CD8-positive, alpha-beta memory T cell (primary cell): ENCODE measurements at regions of chr14 and their contacts with region 1.

Region 1: GRCh38 chr14:103104654-103105452 is 10.3 kb downstream of the EXOC3L4 start:
- DNase-seq: peak; percentile 59 to 73 (median 65)
- H3K4me3 ChIP-seq: no peak overlapping the region
- H3K4me3 Mint-ChIP-seq: peak overlapping the region in 3 of 7 donors; percentile 27 to 40 (median 38)
- H3K27ac ChIP-seq: no peak overlapping the region
- H3K27ac Mint-ChIP-seq: no peak overlapping the region
- H3K4me1 ChIP-seq: peaks cover 5% of the 10 kb centered on the region
- H3K4me1 Mint-ChIP-seq: peaks cover 0 to 12% (median 5%) of the 10 kb centered on the region in 3 donors
- H3K27me3 ChIP-seq: peaks cover 10% of the 10 kb centered on the region
- H3K27me3 Mint-ChIP-seq: peaks cover 16 to 25% of the 10 kb centered on the region in 2 donors

Region 2: DNA sequence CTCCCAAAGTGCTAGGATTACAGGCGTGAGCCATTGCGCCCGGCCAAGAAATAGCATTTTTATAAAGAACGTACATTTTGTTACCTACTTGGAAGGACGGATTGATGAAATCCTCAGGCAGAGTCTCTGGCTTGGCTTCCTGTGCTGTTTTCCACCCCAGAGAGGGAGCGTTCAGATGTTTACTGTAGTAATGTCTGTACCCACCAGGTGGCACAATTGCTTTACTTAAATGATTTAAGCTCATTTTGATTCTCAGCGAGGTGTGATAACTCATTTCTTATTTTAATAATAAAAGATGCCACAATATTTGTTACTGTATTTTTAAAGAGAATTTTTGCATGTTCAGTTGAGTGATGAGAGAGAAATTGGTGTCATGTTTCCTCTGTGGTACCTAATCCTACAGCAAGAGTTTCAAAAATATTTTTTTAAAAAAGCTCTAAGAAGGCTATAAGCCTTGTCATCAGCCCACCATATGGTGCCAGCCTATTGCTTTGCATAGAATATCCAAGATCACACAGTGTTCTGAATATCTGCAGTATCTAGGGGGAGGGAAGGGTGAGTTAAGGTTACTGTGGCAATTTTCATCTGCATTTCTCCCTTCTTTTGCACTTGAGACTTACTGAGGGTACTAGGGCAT is 410.2 kb before region 1 on chr14:
- CTCF ChIA-PET with region 1: interaction called, 20 read pairs
- POLR2A ChIA-PET with region 1: no interaction called
- DNase-seq: peak; percentile 19 to 59 (median 42)
- H3K4me3 ChIP-seq: no peak overlapping the region
- H3K4me3 Mint-ChIP-seq: no peak overlapping the region
- H3K27ac ChIP-seq: no peak overlapping the region
- H3K27ac Mint-ChIP-seq: peak overlapping the region in 1 of 8 donors; percentile 7
- H3K4me1 ChIP-seq: peaks cover 12% of the 10 kb centered on the region
- H3K4me1 Mint-ChIP-seq: peaks cover 14 to 39% (median 29%) of the 10 kb centered on the region in 3 donors
- H3K27me3 ChIP-seq: no peaks in the 10 kb centered on the region
- H3K27me3 Mint-ChIP-seq: no peaks in the 10 kb centered on the region

Region 3: GRCh38 chr14:103094406-103095209 is 10.2 kb before region 1 on chr14 and contains the start of gene EXOC3L4:
- CTCF ChIA-PET with region 1: interaction called, 28 read pairs
- POLR2A ChIA-PET with region 1: no interaction called
- DNase-seq: no peak
- H3K4me3 ChIP-seq: no peak within 1 kb of the TSS
- H3K4me3 Mint-ChIP-seq: no peak within 1 kb of the TSS
- H3K27ac ChIP-seq: no peak within 1 kb of the TSS
- H3K27ac Mint-ChIP-seq: peak within 1 kb of the TSS in 1 of 8 donors; percentile 88
- H3K4me1 ChIP-seq: peaks cover 6% of the 10 kb centered on the region
- H3K4me1 Mint-ChIP-seq: peaks cover 0 to 7% (median 0%) of the 10 kb centered on the region in 3 donors
- H3K27me3 ChIP-seq: no peaks in the 10 kb centered on the region
- H3K27me3 Mint-ChIP-seq: peaks cover 3 to 13% of the 10 kb centered on the region in 2 donors
- total RNA-seq, gene EXOC3L4: not detected

Region 4: DNA sequence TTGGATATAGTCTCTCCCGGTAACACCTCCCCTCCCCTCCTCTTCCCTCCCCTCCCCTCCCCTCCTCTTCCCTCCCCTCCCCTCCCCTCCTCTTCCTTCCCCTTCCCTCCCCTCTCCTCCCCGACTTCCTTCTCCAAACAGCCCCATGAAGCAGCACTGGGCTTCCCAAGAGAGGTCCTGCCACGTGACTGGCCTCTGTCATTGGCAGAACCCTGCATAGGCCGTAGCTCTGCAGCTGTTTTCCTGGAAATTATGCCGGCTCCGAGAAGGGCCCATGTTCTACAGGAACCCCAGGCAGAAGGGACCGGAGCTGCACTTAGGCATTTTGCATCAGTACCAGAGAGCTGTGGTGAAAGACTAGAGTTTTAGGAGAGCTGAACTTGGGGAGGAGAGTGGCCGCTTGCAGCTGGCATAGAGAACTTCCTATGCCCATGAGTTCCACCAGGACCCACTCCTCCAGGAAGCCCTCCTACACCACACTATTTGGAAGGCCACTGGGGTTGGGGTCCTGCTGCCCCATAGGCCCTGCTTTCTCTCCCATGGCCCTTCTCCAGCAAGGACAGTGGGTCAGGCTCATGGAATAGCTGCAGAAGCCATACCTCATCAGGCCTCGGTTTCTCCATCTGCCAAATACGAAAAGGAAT is 13.3 kb after region 1 on chr14:
- CTCF ChIA-PET with region 1: interaction called, 12 read pairs
- POLR2A ChIA-PET with region 1: no interaction called
- DNase-seq: no peak
- H3K4me3 ChIP-seq: no peak overlapping the region
- H3K4me3 Mint-ChIP-seq: no peak overlapping the region
- H3K27ac ChIP-seq: peak overlapping the region; percentile 79
- H3K27ac Mint-ChIP-seq: no peak overlapping the region
- H3K4me1 ChIP-seq: peaks cover 7% of the 10 kb centered on the region
- H3K4me1 Mint-ChIP-seq: peaks cover 6 to 13% (median 8%) of the 10 kb centered on the region in 3 donors
- H3K27me3 ChIP-seq: peaks cover 4% of the 10 kb centered on the region
- H3K27me3 Mint-ChIP-seq: peaks cover 19 to 20% of the 10 kb centered on the region in 2 donors

Region 5: DNA sequence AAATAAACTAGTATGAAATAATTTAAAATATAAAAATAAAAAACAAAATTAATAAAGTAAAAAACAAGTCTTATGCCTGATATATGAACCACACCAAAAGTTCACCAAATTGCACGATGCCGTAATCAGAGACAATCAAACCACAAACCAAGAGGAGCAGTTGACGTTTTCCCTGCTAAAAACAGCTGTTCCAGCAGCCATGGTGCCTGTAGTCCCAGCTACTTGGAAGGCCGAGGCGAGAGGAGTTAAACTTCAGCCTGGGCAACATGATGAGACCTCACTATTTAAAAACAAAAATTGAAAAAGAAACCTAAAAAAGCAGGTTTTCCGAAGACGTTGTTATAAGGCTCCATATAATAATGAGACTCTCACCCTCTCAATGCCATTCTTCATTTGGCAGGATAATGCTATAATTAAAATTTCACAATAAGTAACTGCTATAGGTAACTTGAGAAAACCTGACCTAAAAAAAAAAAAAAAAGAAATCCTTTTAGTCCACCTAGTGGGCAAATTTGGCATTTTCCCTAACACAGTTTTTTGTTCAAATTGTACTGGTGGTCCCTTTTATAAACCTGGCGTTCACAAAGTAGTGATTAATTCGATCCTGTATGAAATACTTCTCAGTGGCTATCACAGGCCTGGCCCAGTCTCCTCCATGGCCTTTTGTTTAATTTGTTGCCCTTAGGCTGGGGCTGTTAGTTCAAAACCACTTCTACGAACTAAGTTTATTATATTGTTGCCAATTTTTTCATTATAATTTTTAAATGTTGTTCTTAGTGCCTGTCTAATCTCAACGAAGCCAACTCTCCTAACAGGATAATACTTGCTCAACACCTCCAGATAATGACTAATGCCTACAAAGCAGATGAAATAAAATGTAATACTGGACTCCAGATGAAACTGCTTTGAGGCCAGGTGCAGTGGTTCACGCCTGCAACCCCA is 80.5 kb after region 1 on chr14:
- CTCF ChIA-PET with region 1: interaction called, 10 read pairs
- POLR2A ChIA-PET with region 1: no interaction called
- DNase-seq: peak in 1 of 5 donors; percentile 31
- H3K4me3 ChIP-seq: no peak overlapping the region
- H3K4me3 Mint-ChIP-seq: no peak overlapping the region
- H3K27ac ChIP-seq: no peak overlapping the region
- H3K27ac Mint-ChIP-seq: no peak overlapping the region
- H3K4me1 ChIP-seq: no peaks in the 10 kb centered on the region
- H3K4me1 Mint-ChIP-seq: peaks cover 6 to 14% (median 14%) of the 10 kb centered on the region in 3 donors
- H3K27me3 ChIP-seq: peaks cover 8% of the 10 kb centered on the region
- H3K27me3 Mint-ChIP-seq: peaks cover 35 to 63% of the 10 kb centered on the region in 2 donors

Region 6: GRCh38 chr14:103290494-103290893 is 185.6 kb after region 1 on chr14:
- CTCF ChIA-PET with region 1: interaction called, 12 read pairs
- POLR2A ChIA-PET with region 1: no interaction called
- DNase-seq: no peak
- H3K4me3 ChIP-seq: no peak overlapping the region
- H3K4me3 Mint-ChIP-seq: no peak overlapping the region
- H3K27ac ChIP-seq: no peak overlapping the region
- H3K27ac Mint-ChIP-seq: no peak overlapping the region
- H3K4me1 ChIP-seq: no peaks in the 10 kb centered on the region
- H3K4me1 Mint-ChIP-seq: no peaks in the 10 kb centered on the region
- H3K27me3 ChIP-seq: no peaks in the 10 kb centered on the region
- H3K27me3 Mint-ChIP-seq: peaks cover 4 to 32% of the 10 kb centered on the region in 2 donors